AG04450 (cell line): ENCODE measurements at regions of chr17 and their contacts with region 1.

Region 1: DNA sequence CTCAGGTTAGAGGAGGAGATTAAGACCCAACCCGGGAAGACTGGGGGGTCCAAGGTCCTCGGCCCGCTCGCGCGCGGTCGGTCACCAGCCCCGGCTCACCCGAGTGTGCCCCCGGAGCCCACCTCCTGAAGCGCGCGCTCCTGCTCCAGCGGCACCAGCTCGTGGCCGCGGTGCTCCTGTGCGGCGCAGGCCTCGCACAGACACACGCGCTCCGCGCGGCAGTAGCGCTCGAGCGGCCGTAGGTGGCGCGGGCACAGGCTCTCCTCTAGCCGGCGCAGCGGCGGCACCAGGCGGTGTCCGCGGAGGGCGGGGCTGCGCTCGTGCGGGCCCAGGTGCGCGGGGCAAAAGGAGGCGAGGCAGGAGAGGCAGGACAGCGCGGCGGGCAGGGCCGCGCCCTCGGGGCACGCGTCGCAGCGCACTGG is 618 bp downstream of the TRIM47 start:
- DNase-seq: no peak
- H3K4me3 ChIP-seq: peak overlapping the region; percentile 73
- H3K27ac ChIP-seq: peak overlapping the region; percentile 89
- H3K27me3 ChIP-seq: peaks cover 6% of the 10 kb centered on the region
- CTCF ChIP-seq: peak; percentile 49

Region 2: GRCh38 chr17:75654176-75654575 is 223.6 kb before region 1 on chr17:
- CTCF ChIA-PET with region 1: no interaction called
- POLR2A ChIA-PET with region 1: no interaction called
- DNase-seq: no peak
- H3K4me3 ChIP-seq: no peak overlapping the region
- H3K27ac ChIP-seq: no peak overlapping the region
- H3K27me3 ChIP-seq: no peaks in the 10 kb centered on the region
- CTCF ChIP-seq: peak; percentile 26

Region 3: DNA sequence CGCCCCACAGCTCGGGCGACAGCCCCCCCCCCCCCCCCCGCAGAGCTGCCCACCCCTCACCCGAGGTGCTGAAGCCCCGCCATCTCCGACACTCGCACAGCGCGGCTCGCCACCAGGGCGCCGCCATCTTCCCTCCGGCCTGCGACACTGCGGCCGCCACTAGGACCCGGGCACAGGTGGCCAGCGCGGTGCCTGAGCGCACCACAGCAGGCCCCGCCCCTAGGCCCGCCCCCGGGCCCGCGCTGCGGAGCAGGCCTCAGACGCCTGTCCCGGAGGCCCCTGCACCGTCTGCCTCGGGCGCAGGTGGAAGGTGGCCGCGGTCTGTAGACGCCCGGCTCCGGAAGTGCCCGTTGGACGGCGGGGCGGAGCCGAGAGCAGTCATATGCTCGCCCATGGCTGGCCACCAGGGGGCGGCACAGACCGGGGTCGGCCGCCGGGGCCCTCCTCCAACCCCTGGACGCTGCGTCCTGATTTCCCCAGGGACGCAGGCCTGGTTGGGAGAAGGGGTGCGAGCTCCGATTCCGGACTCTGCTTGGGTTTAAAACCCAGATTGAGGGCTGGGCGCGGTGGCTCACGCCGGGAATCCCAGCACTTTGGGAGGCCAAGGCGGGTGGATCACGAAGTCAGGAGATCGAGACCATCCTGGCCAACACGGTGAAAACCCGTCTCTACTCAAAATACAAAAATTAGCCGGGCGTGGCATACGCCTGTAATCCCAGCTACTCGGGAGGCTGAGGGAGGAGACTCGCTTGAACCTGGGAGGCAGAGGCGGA is 27.2 kb after region 1 on chr17 and contains the start of gene MRPL38:
- CTCF ChIA-PET with region 1: interaction called, 12 read pairs
- POLR2A ChIA-PET with region 1: no interaction called
- DNase-seq: peak; percentile 80
- H3K4me3 ChIP-seq: peak within 1 kb of the TSS; percentile 75
- H3K27ac ChIP-seq: peak within 1 kb of the TSS; percentile 61
- H3K27me3 ChIP-seq: no peaks in the 10 kb centered on the region
- CTCF ChIP-seq: peak; percentile 83
- polyA plus RNA-seq, gene MRPL38: 16.6 and 21.9 TPM in 2 replicates